Breast epithelium (tissue), 4 donors: ENCODE measurements at regions of chr16 and their contacts with region 1.

Region 1: DNA sequence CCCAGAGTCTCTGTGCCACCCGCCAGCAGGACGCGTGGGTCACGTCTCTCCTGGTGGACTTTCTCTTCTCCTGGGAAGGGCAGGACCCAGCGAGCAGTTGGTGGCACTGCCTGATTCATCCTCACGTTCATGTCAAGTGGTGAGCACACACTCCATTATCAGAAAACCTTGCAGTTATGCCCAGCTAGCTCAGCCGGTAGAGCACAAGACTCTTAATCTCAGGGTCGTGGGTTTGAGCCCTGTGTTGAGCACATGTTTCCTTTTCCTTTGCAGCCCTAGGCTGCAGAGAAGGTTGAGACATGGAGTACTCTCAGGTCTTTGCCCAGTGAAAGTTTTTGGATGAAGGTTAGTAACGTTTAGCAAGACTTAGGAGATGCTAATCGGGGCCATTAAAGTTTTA is 8.0 kb downstream of the OR1F1 start:
- DNase-seq: no peak
- H3K4me3 ChIP-seq: no peak overlapping the region
- H3K27ac ChIP-seq: no peak overlapping the region
- H3K4me1 ChIP-seq: no peaks in the 10 kb centered on the region
- H3K27me3 ChIP-seq: peaks cover 0 to 70% of the 10 kb centered on the region in 2 donors
- CTCF ChIP-seq: no peak
- POLR2A ChIP-seq: no peak

Region 2: DNA sequence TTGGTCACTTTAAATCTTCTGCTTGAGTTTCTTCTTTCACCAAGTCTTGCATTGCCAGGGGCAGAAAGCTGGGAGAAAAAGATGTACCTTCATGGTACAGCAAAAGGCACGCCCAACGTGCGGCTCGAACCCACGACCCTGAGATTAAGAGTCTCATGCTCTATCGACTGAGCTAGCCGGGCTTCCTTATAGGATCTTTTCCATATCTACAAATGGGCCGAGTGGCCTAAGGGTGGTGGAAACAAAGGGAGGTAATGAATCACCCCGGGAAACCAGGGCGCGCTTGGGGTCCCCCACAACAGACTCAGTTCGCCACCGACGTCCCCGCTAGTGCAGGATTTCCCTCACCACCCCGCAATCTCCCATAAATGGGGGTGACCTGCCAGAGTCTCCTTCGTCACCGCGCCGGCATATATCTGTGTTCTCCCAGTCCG is 15.5 kb before region 1 on chr16:
- intact Hi-C with region 1: loop called (anchors 1 kb)
- DNase-seq: no peak
- H3K4me3 ChIP-seq: no peak overlapping the region
- H3K27ac ChIP-seq: no peak overlapping the region
- H3K4me1 ChIP-seq: no peaks in the 10 kb centered on the region
- H3K27me3 ChIP-seq: peaks cover 0 to 94% of the 10 kb centered on the region in 2 donors
- CTCF ChIP-seq: no peak
- POLR2A ChIP-seq: no peak

Region 3: DNA sequence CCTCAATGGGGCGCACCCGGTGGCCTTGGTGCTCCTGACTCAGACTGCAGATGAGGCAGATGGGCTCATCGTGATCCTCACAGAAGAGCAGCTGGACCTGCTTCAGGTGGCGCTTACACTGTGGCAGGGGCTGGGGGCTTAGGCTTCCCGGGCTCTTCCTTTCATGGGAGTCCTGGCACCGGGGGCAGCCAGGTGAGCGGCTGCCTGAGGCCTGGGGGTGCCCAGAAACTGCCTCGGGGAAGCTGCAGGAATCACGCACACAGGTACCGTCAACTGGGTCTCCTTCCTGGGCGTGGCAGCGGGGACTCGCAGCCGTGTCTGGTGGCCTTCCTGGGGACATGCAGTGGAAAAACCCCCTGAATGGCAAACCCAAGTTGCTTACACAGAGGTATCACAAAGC is 53.5 kb after region 1 on chr16:
- intact Hi-C with region 1: loop called (anchors 2 kb)
- DNase-seq: no peak
- H3K4me3 ChIP-seq: no peak overlapping the region
- H3K27ac ChIP-seq: no peak overlapping the region
- H3K4me1 ChIP-seq: no peaks in the 10 kb centered on the region
- H3K27me3 ChIP-seq: no peaks in the 10 kb centered on the region
- CTCF ChIP-seq: no peak
- POLR2A ChIP-seq: no peak